HEK293 (cell line): ENCODE measurements at regions of chr12 and their contacts with region 1.

Region 1: GRCh38 chr12:54259194-54260011 is 20.5 kb downstream of the CBX5 start:
- H3K4me3 ChIP-seq: peak overlapping the region; percentile 45
- H3K27ac ChIP-seq: peak overlapping the region; percentile 66
- H3K4me1 ChIP-seq: peaks cover 31% of the 10 kb centered on the region
- CTCF ChIP-seq: no peak

Region 2: DNA sequence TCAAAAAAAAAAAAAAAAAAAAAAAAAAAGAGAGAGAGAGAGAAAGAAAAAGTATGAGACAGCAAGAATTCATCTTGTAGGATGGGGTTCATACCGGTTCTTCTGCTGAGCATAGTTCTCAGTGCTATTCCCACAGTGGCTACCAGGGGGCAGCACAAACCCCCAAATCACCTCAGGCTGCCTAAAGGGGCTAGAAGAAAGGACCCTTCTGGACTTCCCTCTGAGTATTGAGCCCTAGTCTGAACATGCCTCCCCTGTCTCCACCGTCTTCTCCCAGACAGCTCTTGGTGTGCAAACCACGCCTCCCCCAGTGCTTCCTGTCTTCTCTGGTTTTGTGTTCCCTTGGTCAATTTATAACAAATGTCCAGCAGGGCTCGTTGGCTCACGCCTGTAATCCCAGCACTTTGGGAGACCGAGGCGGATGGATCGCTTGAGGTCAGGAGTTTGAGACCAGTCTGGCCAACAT is 39.3 kb before region 1 on chr12:
- CTCF ChIA-PET with region 1: interaction called, 11 read pairs
- POLR2A ChIA-PET with region 1: no interaction called
- H3K4me3 ChIP-seq: no peak overlapping the region
- H3K27ac ChIP-seq: no peak overlapping the region
- H3K4me1 ChIP-seq: no peaks in the 10 kb centered on the region; the same call in 1 of the 2 replicates
- CTCF ChIP-seq: peak; percentile 84

Region 3: GRCh38 chr12:54272214-54272613 is 12.8 kb after region 1 on chr12:
- CTCF ChIA-PET with region 1: interaction called, 7 read pairs
- POLR2A ChIA-PET with region 1: interaction called, 17 read pairs
- H3K4me3 ChIP-seq: no peak overlapping the region
- H3K27ac ChIP-seq: no peak overlapping the region
- H3K4me1 ChIP-seq: peaks cover 6% of the 10 kb centered on the region
- CTCF ChIP-seq: no peak